ENCODE measurements at regions of chr16 and their contacts with region 1.

Region 1: GRCh38 chr16:53703590-53704444 is at the starts of genes FTO and RPGRIP1L:
- DNase-seq: peak; percentile 97
- H3K4me3 Mint-ChIP-seq: peak within 1 kb of the TSS; percentile 100
- H3K27ac Mint-ChIP-seq: peak within 1 kb of the TSS; percentile 98
- H3K4me1 Mint-ChIP-seq: peaks cover 25% of the 10 kb centered on the region
- H3K27me3 Mint-ChIP-seq: no peaks in the 10 kb centered on the region
- total RNA-seq, gene FTO: 62.1 and 62.7 TPM in 2 replicates
- total RNA-seq, gene RPGRIP1L: 7.7 and 9.6 TPM in 2 replicates

Region 2: GRCh38 chr16:53503270-53503923 is 200.4 kb before region 1 on chr16:
- intact Hi-C with region 1: loop called (anchors 1 kb)
- DNase-seq: peak; percentile 100
- H3K4me3 Mint-ChIP-seq: peak overlapping the region; percentile 88
- H3K27ac Mint-ChIP-seq: peak overlapping the region; percentile 91
- H3K4me1 Mint-ChIP-seq: peaks cover 45% of the 10 kb centered on the region
- H3K27me3 Mint-ChIP-seq: no peaks in the 10 kb centered on the region

Region 3: GRCh38 chr16:53743149-53743566 is 39.3 kb after region 1 on chr16:
- intact Hi-C with region 1: loop called (anchors 2 kb)
- DNase-seq: no peak
- H3K4me3 Mint-ChIP-seq: no peak overlapping the region
- H3K27ac Mint-ChIP-seq: no peak overlapping the region
- H3K4me1 Mint-ChIP-seq: peaks cover 23% of the 10 kb centered on the region
- H3K27me3 Mint-ChIP-seq: no peaks in the 10 kb centered on the region

Region 4: DNA sequence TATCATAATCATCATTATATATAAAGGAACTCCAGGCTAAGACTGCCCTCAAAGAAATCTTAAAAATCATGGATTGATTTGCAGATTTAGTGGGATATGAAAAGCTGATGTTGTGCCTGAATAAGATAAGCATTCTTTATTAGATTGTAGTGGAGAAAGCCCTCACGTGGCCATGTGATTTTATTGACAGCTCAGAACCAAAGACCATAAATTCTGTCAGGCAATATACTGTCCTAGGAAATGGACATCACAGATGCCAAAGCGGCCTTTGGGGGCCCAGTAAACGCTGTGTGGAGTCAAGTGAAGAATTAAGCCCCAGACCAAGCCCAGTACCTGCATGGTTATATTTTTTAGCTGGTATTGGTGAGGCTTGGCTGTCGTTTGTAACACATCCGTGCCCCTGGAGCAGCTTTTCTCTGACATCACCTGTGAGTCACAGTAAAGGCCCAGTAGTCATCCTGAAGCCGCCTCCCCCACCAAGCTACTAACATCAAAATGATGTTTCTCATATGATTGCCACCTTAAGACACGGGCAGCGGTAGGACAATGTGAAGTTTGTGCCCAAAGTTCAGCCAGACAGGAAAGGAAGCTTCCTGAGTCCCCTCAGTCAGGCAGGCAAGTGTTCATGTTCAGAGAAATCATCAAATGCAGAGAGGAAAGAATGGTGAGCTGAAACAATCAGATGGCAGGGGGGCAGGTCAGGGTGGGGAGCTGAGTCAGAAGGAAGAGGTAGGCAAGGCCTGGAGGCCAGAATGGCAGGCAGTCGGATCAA is 373.4 kb after region 1 on chr16:
- intact Hi-C with region 1: no loop called
- DNase-seq: no peak
- H3K4me3 Mint-ChIP-seq: no peak overlapping the region
- H3K27ac Mint-ChIP-seq: no peak overlapping the region
- H3K4me1 Mint-ChIP-seq: no peaks in the 10 kb centered on the region
- H3K27me3 Mint-ChIP-seq: no peaks in the 10 kb centered on the region

Measured in activated T-helper 2 cell treated with anti-CD3 and anti-CD28 coated beads, Interferon-gamma antibody, Interleukin-2, Interleukin-4, amounts not matched to agents 10 μg/mL and 5 μg/mL and 100 μg/mL, durations not matched to agents 14 hours and 24 hours and 36 hours (primary cell).